Cardiac septum (tissue), 1 donor: ENCODE measurements at regions of chr14 and their contacts with region 1.

Region 1: DNA sequence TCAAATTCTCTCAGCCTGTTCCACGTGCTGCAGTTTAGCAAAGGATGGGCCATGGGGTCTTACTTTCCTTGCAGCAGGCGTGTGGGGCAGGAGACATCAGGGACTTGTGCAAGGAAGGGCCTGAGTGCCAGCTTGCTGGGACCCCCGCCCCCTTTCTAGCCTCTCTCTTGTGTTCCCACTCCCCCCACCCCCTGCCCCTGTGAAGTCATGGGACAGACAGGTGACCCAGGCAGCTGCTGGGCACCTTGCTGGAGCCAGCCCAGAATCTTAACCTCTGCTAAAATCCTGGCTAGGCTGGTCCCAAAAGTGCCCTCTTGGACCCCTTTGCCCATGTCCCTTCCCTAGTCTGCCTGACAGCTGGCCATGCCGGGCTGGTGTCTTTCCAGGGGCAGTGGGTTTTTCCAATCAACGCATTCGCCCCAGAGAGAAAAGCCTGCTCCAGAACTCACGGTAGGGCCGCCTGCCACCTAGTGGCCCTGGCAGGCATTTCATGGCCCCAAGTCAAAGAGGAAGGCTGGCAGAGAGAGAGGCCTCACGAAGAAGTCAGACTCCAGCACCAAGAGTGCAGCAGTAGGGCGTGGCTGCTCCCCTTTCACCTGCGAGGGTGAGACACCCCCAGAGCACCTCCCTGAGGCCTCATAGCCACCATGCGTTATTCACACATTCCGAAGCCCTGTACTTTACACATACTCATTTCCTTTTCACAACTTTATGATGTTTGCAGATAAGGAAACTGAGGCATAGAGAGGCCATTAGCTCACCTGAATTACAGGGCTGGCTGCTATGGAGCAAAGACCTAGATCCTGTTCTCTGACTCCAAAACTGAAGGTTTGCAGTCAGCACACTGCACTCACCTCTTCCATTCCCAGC is 67.4 kb downstream of the LGMN start:
- DNase-seq: peak; percentile 90

Region 2: DNA sequence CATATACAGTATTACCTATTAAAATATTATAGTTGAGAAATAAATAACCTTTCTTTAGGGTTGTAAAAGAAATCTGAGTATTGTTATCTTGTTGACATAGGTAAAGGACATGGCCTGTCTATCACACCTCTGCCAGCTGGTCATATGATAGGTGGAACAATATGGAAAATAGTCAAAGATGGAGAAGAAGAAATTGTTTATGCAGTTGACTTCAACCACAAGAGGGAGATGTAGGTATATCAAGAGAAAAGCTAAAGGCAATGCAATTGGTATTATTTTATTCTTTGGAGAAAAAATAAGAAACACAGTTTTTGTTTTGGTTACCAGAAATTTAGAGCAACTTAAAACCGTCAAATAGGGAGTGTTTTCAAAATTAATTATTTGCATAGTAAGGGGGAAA is 545.7 kb before region 1 on chr14:
- intact Hi-C with region 1: loop called (anchors 5 kb)
- DNase-seq: no peak

Region 3: DNA sequence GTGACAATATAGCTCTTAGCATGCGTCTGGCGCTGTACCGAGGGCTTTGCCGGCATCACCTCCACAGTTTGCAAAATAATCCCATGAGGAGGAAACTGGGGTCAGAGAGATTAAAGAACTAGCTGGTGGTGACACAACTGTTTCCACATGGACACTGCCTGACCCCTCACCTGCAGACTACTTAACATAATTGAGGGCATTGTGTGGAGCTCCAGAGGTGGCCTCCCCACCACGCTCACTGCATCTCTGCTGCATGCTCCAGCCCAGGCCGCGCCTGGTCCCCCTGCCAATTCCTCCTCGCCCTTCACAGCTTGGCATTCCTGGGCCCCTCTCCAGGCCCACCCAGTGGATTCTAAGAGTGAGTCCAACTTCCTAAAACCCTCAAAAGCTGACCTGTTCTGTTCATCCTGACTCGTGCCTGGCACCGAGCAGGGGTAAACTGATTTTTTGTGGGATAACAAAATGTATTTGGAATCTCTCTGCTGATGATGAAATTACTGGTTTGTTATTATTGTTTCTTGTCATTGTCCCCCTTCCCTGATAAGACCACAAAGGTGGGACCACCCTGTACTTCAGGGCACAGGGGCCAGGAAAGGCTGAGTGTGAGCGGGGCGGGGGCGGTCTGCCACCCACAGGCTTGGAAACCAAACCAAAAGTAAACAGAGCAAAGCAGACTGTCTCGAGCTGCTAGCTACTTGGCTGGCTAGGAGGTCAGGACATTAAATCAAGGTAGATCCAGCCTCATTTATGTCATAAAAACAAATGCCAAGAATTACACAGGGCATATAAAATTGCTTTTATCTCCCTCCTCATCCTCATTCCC is 282.5 kb after region 1 on chr14:
- intact Hi-C with region 1: no loop called
- DNase-seq: no peak